ENCODE measurements at regions of chr3 and their contacts with region 1.

Region 1: GRCh38 chr3:77039606-77040171 is at the start of gene ROBO2:
- DNase-seq: peak in 1 of 2 donors; percentile 22
- H3K4me3 ChIP-seq: peak within 1 kb of the TSS; percentile 55 to 57
- H3K27ac ChIP-seq: peak within 1 kb of the TSS; percentile 30 to 35
- H3K4me1 ChIP-seq: peaks cover 0 to 22% (median 12%) of the 10 kb centered on the region in 4 donors
- H3K27me3 ChIP-seq: no peaks in the 10 kb centered on the region
- CTCF ChIP-seq: no peak

Region 2: GRCh38 chr3:77081240-77081661 is 41.6 kb after region 1 on chr3:
- intact Hi-C with region 1: no loop called
- DNase-seq: no peak
- H3K4me3 ChIP-seq: no peak overlapping the region
- H3K27ac ChIP-seq: no peak overlapping the region
- H3K4me1 ChIP-seq: no peaks in the 10 kb centered on the region
- H3K27me3 ChIP-seq: no peaks in the 10 kb centered on the region
- CTCF ChIP-seq: no peak

Region 3: DNA sequence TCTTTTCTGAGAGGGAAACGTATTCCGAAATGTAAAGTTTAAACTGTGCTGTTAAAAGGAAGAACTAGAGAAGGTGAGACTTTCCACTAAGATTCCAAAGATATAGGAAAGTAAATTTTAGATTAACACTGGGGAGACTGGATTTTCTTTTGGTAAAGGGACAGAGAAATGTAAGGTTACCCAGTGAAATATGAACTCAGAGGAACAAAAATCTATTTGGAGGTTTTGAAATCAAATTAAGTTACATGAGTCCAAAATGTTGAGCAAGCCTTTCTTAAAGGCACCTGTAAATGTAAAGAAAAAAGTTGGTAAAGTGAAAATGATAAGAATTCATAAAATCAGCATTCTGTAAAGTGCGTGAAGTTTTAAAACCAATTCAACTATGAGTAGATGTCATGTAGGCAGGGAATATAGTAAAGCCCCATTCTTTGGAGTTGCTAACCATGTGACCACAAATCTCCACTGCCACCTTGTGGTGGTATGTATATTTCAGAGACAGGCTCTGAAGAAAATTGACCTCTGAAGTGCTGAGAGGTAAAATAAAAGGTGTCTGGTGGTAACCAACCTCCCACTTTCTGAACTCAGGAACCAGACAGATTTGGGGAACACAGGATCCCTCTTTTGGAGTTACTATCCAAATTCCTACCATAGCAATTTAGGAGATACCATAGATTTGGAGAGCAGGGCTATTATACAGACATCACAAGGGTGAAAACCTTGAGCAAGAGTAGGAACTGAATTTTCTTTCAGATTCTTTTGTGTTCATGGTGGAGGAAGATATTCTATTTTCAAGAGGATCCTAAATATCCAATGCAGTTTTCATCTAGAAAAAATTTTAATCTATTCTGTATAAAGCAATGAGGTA is 215.5 kb after region 1 on chr3:
- intact Hi-C with region 1: loop called (anchors 5 kb)
- DNase-seq: no peak
- H3K4me3 ChIP-seq: no peak overlapping the region
- H3K27ac ChIP-seq: no peak overlapping the region
- H3K4me1 ChIP-seq: no peaks in the 10 kb centered on the region
- H3K27me3 ChIP-seq: no peaks in the 10 kb centered on the region
- CTCF ChIP-seq: peak; percentile 62 to 67

Region 4: GRCh38 chr3:78644847-78645246 is 1605.2 kb after region 1 on chr3:
- intact Hi-C with region 1: loop called (anchors 5 kb)
- DNase-seq: no peak
- H3K4me3 ChIP-seq: no peak overlapping the region
- H3K27ac ChIP-seq: no peak overlapping the region
- H3K4me1 ChIP-seq: peaks cover 0 to 12% (median 0%) of the 10 kb centered on the region in 4 donors
- H3K27me3 ChIP-seq: no peaks in the 10 kb centered on the region
- CTCF ChIP-seq: no peak